Ascending aorta (tissue), 2 donors: ENCODE measurements at regions of chr9 and their contacts with region 1.

Region 1: DNA sequence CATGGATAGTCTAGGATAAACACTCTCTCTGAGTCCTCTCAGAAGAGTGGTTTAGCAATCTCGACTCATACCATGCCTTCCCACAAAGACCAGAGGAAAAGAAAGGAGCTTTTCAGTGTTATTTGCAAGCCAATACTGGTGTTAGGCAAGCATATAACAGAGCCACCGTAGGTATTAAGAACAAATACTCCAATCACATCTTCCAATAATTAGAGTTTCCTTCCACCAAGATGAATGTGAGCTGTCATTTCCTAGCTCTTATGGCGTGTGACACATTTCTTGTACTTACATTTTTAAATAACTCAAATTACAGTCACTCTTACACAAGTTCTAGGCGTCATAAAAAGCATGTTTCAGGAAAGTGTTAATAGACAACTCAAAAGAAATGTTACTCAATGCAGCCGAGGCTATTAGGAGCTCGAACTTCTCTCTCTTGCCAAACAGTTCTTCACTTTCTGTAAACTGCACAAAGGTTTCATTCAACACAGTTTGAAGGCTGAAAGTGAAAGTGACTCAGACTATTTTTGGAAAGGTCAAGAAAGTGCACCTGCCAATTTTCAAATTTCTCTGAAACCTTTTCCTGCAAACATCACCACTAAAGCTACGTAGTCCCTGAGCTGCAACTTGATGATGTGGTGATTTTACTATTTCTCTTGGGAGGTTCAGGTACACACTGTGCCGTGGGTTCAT is 153.8 kb downstream of the AUH start:
- DNase-seq: no peak
- H3K4me3 ChIP-seq: peak overlapping the region in 1 of 2 donors; percentile 34
- H3K27ac ChIP-seq: peak overlapping the region; percentile 73
- H3K4me1 ChIP-seq: peaks cover 0 to 10% of the 10 kb centered on the region in 2 donors
- H3K27me3 ChIP-seq: no peaks in the 10 kb centered on the region
- CTCF ChIP-seq: no peak

Region 2: DNA sequence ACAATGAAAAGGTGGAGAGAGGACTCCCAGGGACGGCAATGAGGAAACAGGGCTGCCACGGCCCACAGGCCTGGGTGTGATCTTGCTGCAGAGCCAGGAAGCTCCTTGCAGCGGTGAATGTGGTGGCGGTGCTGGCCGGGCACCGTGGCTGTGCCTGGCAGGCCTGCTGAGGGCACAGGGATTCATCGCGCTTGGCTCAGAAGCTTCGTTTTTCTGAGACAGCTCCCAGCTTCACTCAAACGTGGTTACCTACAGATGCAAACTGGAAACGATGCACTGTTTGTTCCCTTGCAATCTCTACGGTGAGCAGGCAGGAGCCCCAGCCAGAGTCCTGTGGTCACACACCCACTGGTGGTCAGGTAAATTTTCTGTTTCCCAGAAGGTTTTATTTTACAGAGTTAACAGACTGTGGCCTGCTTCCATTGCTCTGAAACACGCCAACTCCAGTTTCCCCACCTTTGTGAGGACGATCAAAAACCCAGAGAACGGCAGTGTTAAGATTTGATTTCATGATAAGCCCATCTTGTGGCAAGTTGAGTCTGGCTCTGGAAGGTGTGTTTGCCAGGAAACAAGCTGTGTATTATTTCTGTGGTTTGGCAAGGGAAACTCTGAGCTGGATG is 30.1 kb before region 1 on chr9:
- intact Hi-C with region 1: no loop called
- DNase-seq: peak in 1 of 2 donors; percentile 59
- H3K4me3 ChIP-seq: no peak overlapping the region
- H3K27ac ChIP-seq: no peak overlapping the region
- H3K4me1 ChIP-seq: no peaks in the 10 kb centered on the region
- H3K27me3 ChIP-seq: no peaks in the 10 kb centered on the region
- CTCF ChIP-seq: no peak

Region 3: DNA sequence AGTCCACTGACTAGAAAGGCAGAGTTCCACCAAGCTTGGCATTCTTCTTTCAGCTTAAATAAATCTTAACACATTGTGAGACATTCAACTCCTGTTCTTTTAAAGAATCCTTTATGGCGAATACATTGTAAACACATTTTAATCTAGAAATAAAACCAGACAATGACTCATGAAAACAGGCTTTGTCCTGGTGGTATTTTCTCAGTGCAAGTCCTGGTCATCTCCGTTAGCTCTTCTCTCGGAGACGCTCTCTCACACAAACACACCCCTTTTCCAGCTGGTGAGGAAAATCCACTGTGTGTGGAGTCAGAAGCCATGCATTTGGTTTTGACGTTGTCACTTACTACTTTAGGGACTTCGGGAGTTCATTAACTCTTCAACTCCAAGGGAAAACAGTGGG is 13.5 kb after region 1 on chr9:
- intact Hi-C with region 1: no loop called
- DNase-seq: no peak
- H3K4me3 ChIP-seq: no peak overlapping the region
- H3K27ac ChIP-seq: no peak overlapping the region
- H3K4me1 ChIP-seq: no peaks in the 10 kb centered on the region
- H3K27me3 ChIP-seq: no peaks in the 10 kb centered on the region
- CTCF ChIP-seq: no peak

Region 4: DNA sequence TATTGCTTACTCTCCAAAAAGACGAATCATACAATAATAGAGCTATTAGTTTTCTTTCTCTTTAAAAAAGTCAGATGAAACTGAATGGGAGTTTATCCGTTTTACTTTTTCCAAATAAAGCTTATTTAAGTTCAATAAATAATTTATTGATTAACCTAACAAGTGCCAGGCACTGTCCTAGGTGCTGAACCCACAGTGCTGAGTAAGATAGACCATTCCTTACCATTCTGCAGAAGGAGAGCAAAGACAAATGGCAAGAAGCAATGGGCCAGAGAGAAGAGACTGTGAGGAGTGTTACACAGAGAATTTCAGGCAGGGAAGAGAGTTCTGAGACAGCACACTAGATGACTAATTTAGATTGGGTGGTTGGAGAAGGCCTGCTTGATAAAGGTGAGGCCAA is 26.6 kb after region 1 on chr9:
- intact Hi-C with region 1: no loop called
- DNase-seq: no peak
- H3K4me3 ChIP-seq: no peak overlapping the region
- H3K27ac ChIP-seq: no peak overlapping the region
- H3K4me1 ChIP-seq: no peaks in the 10 kb centered on the region
- H3K27me3 ChIP-seq: no peaks in the 10 kb centered on the region
- CTCF ChIP-seq: no peak

Region 5: GRCh38 chr9:91483189-91483691 is 275.4 kb after region 1 on chr9:
- intact Hi-C with region 1: loop called (anchors 5 kb)
- DNase-seq: peak; percentile 29 to 85
- H3K4me3 ChIP-seq: peak overlapping the region in 1 of 2 donors; percentile 34
- H3K27ac ChIP-seq: peak overlapping the region; percentile 76 to 84
- H3K4me1 ChIP-seq: peaks cover 0 to 7% of the 10 kb centered on the region in 2 donors
- H3K27me3 ChIP-seq: no peaks in the 10 kb centered on the region
- CTCF ChIP-seq: no peak